Activated naive CD4-positive, alpha-beta T cell treated with anti-CD3 and anti-CD28 coated beads for 36 hours (primary cell): ENCODE measurements at regions of chr6 and their contacts with region 1.

Region 1: GRCh38 chr6:157764178-157765033 is 58.6 kb upstream of the SNX9 start:
- DNase-seq: peak; percentile 94
- H3K4me3 Mint-ChIP-seq: peak overlapping the region; percentile 7
- H3K27ac Mint-ChIP-seq: peak overlapping the region; percentile 91
- H3K4me1 Mint-ChIP-seq: peaks cover 86% of the 10 kb centered on the region
- H3K27me3 Mint-ChIP-seq: no peaks in the 10 kb centered on the region

Region 2: GRCh38 chr6:157054531-157054979 is 709.9 kb before region 1 on chr6:
- CTCF ChIA-PET with region 1: no interaction called
- intact Hi-C with region 1: loop called (anchors 10 kb)
- DNase-seq: peak; percentile 67
- H3K4me3 Mint-ChIP-seq: peak overlapping the region; percentile 29
- H3K27ac Mint-ChIP-seq: peak overlapping the region; percentile 94
- H3K4me1 Mint-ChIP-seq: peaks cover 43% of the 10 kb centered on the region
- H3K27me3 Mint-ChIP-seq: no peaks in the 10 kb centered on the region

Region 3: DNA sequence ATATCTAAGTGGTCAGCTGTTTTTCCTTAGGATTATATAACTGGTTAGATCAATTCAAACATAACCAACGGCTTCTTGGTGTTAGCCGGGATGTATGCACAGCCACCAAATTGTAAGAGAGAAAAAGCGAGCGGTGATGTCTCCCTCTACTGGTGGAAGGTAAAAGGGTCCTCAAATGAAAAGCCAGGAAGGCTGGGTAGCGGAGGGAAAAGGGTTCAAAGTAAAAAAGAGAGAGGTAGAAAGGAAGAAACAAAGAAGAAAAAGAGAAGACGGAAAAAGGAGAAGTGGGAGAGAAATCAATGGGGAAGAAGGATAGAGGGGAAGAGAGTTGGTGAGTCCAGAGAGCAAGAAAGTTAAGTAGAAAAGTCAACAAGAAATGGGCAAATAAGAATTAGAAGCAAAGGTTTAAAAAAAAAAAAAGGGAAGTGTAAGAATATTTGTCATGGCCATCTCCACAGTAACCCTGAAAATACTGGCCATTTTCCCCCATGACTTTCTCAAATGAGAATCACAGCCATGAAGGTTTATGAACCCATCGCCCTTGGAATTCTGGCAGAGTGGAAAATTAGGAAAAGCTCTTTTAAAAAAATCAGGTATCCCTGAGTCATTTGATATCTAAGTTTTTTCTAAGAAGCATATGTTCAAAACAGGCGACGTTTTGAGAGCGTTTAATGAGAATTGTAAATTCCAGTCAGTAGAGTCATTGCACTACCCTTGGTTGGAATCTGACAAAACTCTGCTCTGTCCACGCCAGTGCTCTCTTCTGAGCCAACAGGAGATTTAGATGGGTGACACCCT is 97.0 kb before region 1 on chr6:
- CTCF ChIA-PET with region 1: no interaction called
- intact Hi-C with region 1: loop called (anchors 1 kb)
- DNase-seq: peak; percentile 78
- H3K4me3 Mint-ChIP-seq: peak overlapping the region; percentile 28
- H3K27ac Mint-ChIP-seq: no peak overlapping the region
- H3K4me1 Mint-ChIP-seq: peaks cover 31% of the 10 kb centered on the region
- H3K27me3 Mint-ChIP-seq: peaks cover 4% of the 10 kb centered on the region

Region 4: GRCh38 chr6:157830354-157831017 is 66.1 kb after region 1 on chr6:
- CTCF ChIA-PET with region 1: interaction called, 6 read pairs
- intact Hi-C with region 1: loop called (anchors 2 kb)
- DNase-seq: no peak
- H3K4me3 Mint-ChIP-seq: peak overlapping the region; percentile 34
- H3K27ac Mint-ChIP-seq: peak overlapping the region; percentile 54
- H3K4me1 Mint-ChIP-seq: peaks cover 71% of the 10 kb centered on the region
- H3K27me3 Mint-ChIP-seq: no peaks in the 10 kb centered on the region

Region 5: DNA sequence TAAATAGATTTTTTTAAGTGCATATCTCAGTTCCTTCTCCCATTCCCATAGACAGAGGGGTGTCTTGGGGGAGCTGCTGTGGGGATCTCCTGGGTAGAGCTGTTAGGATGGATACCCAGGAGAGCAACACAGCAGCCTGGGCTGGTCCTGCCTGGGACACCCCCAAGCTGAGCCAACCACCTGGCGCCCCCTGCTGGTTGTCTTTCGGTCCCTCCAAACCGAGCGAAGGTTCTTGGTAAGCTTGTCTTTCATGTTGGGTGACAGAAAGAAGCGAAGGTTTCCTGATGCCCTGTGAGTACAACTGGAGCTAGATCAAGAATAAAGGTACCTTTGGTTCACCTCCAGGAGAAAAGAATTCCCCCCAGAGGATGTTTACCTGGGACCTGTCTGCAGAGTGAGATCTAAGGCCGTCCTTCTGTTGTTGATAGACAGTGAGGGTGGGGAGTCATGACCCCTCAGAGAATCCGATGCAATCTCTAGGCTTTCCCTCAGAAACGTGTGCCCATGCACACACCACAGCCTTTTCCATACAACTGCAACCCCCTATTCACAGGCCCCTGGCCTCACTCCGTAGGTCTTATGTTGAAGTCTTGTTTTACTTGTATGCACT is 109.4 kb after region 1 on chr6:
- CTCF ChIA-PET with region 1: interaction called, 142 read pairs
- intact Hi-C with region 1: loop called (anchors 1 kb)
- DNase-seq: peak; percentile 96
- H3K4me3 Mint-ChIP-seq: no peak overlapping the region
- H3K27ac Mint-ChIP-seq: peak overlapping the region; percentile 67
- H3K4me1 Mint-ChIP-seq: peaks cover 46% of the 10 kb centered on the region
- H3K27me3 Mint-ChIP-seq: no peaks in the 10 kb centered on the region

Region 6: DNA sequence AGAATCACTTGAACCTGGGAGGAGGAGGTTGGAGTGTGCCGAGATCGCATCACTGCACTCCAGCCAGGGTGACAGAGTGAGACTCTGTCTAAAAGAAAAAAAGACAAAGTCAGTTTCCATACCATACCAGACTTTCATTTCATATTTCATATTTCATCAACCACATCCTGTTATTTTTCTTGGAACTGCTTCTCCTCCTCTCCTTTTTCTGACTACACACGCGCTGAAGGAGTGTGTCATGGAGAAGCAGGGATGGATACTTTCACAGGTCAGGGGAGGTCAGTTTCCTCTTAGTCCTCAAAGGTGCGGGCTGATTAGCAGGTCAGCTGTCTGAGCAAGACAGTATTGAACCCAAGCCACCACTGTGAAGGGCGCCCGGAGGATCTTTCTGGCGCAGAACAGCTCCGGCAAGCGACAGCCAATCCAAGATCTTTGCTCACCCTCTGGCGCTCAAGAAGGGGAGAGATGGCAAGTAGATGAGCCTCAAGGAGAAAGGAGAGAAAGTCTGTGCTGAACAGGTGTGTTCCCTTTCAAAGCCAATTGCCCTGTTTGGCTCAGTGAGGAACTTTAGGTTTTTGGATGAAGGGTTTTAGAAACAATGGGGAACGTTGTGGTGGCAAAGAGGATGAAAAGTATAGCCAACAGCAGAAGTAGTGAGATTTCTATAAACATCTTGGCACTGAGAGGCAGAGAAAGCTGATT is 198.3 kb after region 1 on chr6:
- CTCF ChIA-PET with region 1: no interaction called
- intact Hi-C with region 1: loop called (anchors 2 kb)
- DNase-seq: peak; percentile 55
- H3K4me3 Mint-ChIP-seq: peak overlapping the region; percentile 65
- H3K27ac Mint-ChIP-seq: peak overlapping the region; percentile 89
- H3K4me1 Mint-ChIP-seq: peaks cover 21% of the 10 kb centered on the region
- H3K27me3 Mint-ChIP-seq: no peaks in the 10 kb centered on the region

Region 7: DNA sequence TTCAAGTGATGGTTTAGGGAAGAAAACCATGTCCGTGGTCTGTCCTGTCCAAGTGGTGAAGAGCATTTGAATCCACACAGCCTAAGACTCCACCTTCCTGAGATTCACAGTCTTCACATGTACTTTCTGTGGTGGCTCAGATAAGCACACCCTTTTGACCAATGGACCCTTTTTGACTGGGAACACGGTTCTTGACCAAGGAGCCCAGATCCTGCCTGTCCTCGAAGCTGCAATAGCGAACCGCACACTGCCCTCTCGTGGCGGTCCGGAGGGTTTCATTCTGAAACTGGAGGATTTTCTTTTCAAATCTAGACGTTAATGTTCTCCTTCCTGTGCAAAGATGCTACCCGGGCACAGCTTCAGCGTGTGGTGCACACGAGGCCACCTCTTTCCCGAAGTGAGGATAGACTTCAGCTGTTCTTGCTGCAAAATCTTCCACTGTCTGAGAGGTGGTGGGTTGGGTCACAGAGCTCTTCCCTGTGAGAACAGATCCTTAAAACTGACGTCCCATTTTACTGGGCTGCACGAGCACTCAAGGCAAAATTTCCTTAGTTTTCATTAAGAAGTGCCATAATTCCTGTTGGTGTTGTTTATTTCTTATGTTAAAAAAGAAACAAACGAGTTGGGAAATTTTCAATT is 307.8 kb after region 1 on chr6:
- CTCF ChIA-PET with region 1: interaction called, 8 read pairs
- intact Hi-C with region 1: loop called (anchors 2 kb)
- DNase-seq: peak; percentile 86
- H3K4me3 Mint-ChIP-seq: no peak overlapping the region
- H3K27ac Mint-ChIP-seq: peak overlapping the region; percentile 65
- H3K4me1 Mint-ChIP-seq: peaks cover 26% of the 10 kb centered on the region
- H3K27me3 Mint-ChIP-seq: no peaks in the 10 kb centered on the region